CD4-positive, alpha-beta memory T cell (primary cell): ENCODE measurements at regions of chr3 and their contacts with region 1.

Region 1: DNA sequence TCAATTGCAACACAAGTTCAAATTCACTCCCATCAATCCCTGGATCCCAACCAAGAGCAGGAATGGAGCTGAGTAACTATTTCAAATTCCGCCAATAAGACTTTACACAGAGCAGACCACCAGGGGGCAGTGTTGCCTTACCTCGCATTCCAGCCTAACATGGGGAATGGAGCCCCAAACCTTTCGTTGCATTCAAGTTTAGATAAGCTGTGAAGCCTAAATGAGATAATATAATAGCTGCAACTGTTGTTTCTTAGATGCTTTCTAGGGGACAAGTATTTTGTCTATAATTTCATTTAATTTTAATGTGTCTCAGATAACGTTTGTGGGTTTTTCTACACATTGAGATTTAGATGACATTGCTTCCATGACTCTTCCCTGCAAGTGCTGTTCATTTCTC is 186.7 kb downstream of the NSUN3 start:
- DNase-seq: peak in 4 of 5 donors; percentile 28 to 36 (median 32)
- H3K4me3 ChIP-seq: no peak overlapping the region
- H3K4me3 Mint-ChIP-seq: no peak overlapping the region
- H3K27ac ChIP-seq: no peak overlapping the region
- H3K27ac Mint-ChIP-seq: no peak overlapping the region
- H3K4me1 ChIP-seq: no peaks in the 10 kb centered on the region
- H3K4me1 Mint-ChIP-seq: no peaks in the 10 kb centered on the region
- H3K27me3 ChIP-seq: no peaks in the 10 kb centered on the region
- H3K27me3 Mint-ChIP-seq: peaks cover 13 to 17% of the 10 kb centered on the region in 2 donors

Region 2: GRCh38 chr3:93994056-93994455 is 255.5 kb before region 1 on chr3:
- CTCF ChIA-PET with region 1: no interaction called
- POLR2A ChIA-PET with region 1: no interaction called
- intact Hi-C with region 1: no loop called
- DNase-seq: no peak
- H3K4me3 ChIP-seq: no peak overlapping the region
- H3K4me3 Mint-ChIP-seq: no peak overlapping the region
- H3K27ac ChIP-seq: no peak overlapping the region
- H3K27ac Mint-ChIP-seq: peak overlapping the region in 1 of 7 donors; percentile 16
- H3K4me1 ChIP-seq: no peaks in the 10 kb centered on the region
- H3K4me1 Mint-ChIP-seq: peaks cover 0 to 5% (median 0%) of the 10 kb centered on the region in 4 donors
- H3K27me3 ChIP-seq: no peaks in the 10 kb centered on the region
- H3K27me3 Mint-ChIP-seq: no peaks in the 10 kb centered on the region

Region 3: GRCh38 chr3:94234177-94234788 is 15.3 kb before region 1 on chr3:
- CTCF ChIA-PET with region 1: interaction called, 12 read pairs
- POLR2A ChIA-PET with region 1: no interaction called
- intact Hi-C with region 1: no loop called
- DNase-seq: no peak
- H3K4me3 ChIP-seq: no peak overlapping the region
- H3K4me3 Mint-ChIP-seq: no peak overlapping the region
- H3K27ac ChIP-seq: no peak overlapping the region
- H3K27ac Mint-ChIP-seq: no peak overlapping the region
- H3K4me1 ChIP-seq: no peaks in the 10 kb centered on the region
- H3K4me1 Mint-ChIP-seq: no peaks in the 10 kb centered on the region
- H3K27me3 ChIP-seq: no peaks in the 10 kb centered on the region
- H3K27me3 Mint-ChIP-seq: no peaks in the 10 kb centered on the region

Region 4: GRCh38 chr3:94269763-94270162 is 20.2 kb after region 1 on chr3:
- CTCF ChIA-PET with region 1: interaction called, 17 read pairs
- POLR2A ChIA-PET with region 1: no interaction called
- intact Hi-C with region 1: no loop called
- DNase-seq: no peak
- H3K4me3 ChIP-seq: no peak overlapping the region
- H3K4me3 Mint-ChIP-seq: no peak overlapping the region
- H3K27ac ChIP-seq: no peak overlapping the region
- H3K27ac Mint-ChIP-seq: no peak overlapping the region
- H3K4me1 ChIP-seq: no peaks in the 10 kb centered on the region
- H3K4me1 Mint-ChIP-seq: no peaks in the 10 kb centered on the region
- H3K27me3 ChIP-seq: no peaks in the 10 kb centered on the region
- H3K27me3 Mint-ChIP-seq: peaks cover 0 to 2% of the 10 kb centered on the region in 2 donors